Stomach (tissue), 19 donors: ENCODE measurements at regions of chr10 and their contacts with region 1.

Region 1: DNA sequence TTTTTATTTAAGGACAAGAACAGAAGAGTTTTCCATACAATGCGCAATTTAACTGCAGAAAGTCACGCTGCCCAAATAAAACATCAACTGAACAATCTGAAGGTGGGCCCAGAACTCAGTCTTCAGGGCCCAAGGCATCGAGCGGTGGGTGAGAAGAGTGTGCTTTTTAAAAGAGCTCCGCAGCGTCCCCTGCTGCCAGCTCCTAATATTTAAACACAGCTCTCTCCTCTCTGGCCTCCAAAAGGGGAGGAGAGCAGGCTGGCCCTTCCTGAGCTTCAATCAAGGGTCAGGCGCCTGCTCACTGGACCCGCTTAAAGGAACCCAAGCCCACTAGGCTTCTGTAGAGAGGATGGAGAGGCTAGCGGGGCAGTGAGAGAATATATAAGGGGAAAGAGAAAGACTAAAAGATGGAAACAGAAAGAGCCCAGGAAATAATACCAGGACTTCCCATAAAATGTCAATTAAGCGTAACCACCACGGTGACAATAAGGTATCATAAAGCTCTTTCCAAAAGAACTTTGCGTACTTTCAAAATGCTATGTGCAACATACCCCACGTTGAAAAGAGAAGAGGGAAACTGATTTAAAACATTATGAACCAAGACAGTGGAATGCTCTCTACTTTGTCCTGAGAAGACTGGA is 2.8 kb downstream of the FAM53B start:
- DNase-seq: peak; percentile 87 to 94
- H3K4me3 ChIP-seq: peak overlapping the region in 2 of 4 donors; percentile 88
- H3K27ac ChIP-seq: peak overlapping the region; percentile 30 to 94 (median 83)
- H3K4me1 ChIP-seq: peaks cover 75 to 90% (median 88%) of the 10 kb centered on the region in 4 donors
- H3K27me3 ChIP-seq: no peaks in the 10 kb centered on the region
- CTCF ChIP-seq: peak in 6 of 7 experiments; percentile 17 to 89 (median 78)
- EP300 ChIP-seq: no peak
- POLR2A ChIP-seq: no peak

Region 2: DNA sequence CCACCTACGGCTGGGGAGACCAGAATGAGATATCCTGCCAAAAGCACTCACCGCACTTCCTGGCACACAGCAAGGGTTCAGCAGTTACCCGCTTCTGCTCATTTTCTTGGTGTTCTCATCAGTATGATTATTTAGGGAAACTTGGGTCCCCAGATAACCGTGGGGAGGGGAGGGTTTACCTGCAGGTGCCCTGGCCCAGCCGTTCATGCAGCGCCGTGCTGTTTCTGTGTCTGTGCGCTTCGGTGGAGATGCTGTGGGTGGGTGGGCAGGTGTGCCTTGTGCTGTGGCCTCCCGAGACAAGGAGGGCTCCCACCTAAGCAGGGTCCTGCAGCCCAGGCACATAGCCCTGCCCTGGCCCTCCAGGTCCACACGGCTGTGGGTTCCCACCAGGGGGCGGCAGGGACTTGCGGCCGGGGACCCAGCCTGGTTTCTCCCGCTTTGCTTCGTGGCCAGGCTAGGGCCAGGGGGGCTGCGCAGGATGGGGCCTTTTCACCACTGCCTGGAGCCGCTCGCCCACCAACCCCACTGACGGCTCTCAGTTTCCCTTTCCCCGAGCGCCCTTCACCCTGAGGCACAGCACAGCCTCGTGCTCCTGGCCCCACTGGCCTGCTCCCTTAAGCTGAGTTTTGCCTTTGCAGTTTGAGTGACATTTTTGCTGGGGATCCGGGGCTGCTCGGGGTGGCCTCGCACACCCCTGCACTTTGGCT is 201.3 kb before region 1 on chr10:
- intact Hi-C with region 1: loop called (anchors 5 kb)
- DNase-seq: peak; percentile 64 to 85
- H3K4me3 ChIP-seq: peak overlapping the region in 1 of 4 donors; percentile 12
- H3K27ac ChIP-seq: no peak overlapping the region
- H3K4me1 ChIP-seq: peaks cover 6 to 21% (median 9%) of the 10 kb centered on the region in 4 donors
- H3K27me3 ChIP-seq: no peaks in the 10 kb centered on the region
- CTCF ChIP-seq: peak in 5 of 7 experiments; percentile 60 to 82 (median 77)
- EP300 ChIP-seq: no peak
- POLR2A ChIP-seq: no peak

Region 3: GRCh38 chr10:124943301-124944092 is 202.1 kb after region 1 on chr10:
- intact Hi-C with region 1: no loop called
- DNase-seq: no peak
- H3K4me3 ChIP-seq: peak overlapping the region in 1 of 4 donors; percentile 4
- H3K27ac ChIP-seq: peak overlapping the region in 3 of 5 donors; percentile 49 to 73 (median 49)
- H3K4me1 ChIP-seq: peaks cover 13 to 94% (median 62%) of the 10 kb centered on the region in 4 donors
- H3K27me3 ChIP-seq: no peaks in the 10 kb centered on the region
- CTCF ChIP-seq: no peak
- EP300 ChIP-seq: no peak
- POLR2A ChIP-seq: no peak

Region 4: GRCh38 chr10:124975977-124976514 is 234.6 kb after region 1 on chr10:
- intact Hi-C with region 1: no loop called
- DNase-seq: no peak
- H3K4me3 ChIP-seq: no peak overlapping the region
- H3K27ac ChIP-seq: no peak overlapping the region
- H3K4me1 ChIP-seq: peaks cover 6 to 27% (median 17%) of the 10 kb centered on the region in 4 donors
- H3K27me3 ChIP-seq: no peaks in the 10 kb centered on the region
- CTCF ChIP-seq: no peak
- EP300 ChIP-seq: no peak
- POLR2A ChIP-seq: no peak